Left colon (tissue), 2 donors: ENCODE measurements at regions of chr9 and their contacts with region 1.

Region 1: GRCh38 chr9:128117613-128118471 is 9.7 kb downstream of the PTGES2 start:
- DNase-seq: peak; percentile 87 to 97
- ATAC-seq: peak; percentile 22

Region 2: GRCh38 chr9:127943731-127944144 is 174.1 kb before region 1 on chr9:
- intact Hi-C with region 1: loop called in 1 of 2 experiments (anchors 10 kb)
- DNase-seq: peak; percentile 84 to 88
- ATAC-seq: peak; percentile 81

Region 3: GRCh38 chr9:128001779-128002298 is 116.0 kb before region 1 on chr9:
- intact Hi-C with region 1: no loop called
- DNase-seq: no peak
- ATAC-seq: peak; percentile 47

Region 4: GRCh38 chr9:128034821-128035764 is 82.7 kb before region 1 on chr9:
- intact Hi-C with region 1: loop called in 1 of 2 experiments (anchors 10 kb)
- DNase-seq: peak; percentile 60 to 75
- ATAC-seq: peak; percentile 86